Dendritic cell treated with granulocyte-macrophage colony-stimulating factor and Interleukin-4, amounts not matched to agents 40 ng/mL and 50 ng/mL, for 4 days (primary cell): ENCODE measurements at regions of chrX and their contacts with region 1.

Region 1: DNA sequence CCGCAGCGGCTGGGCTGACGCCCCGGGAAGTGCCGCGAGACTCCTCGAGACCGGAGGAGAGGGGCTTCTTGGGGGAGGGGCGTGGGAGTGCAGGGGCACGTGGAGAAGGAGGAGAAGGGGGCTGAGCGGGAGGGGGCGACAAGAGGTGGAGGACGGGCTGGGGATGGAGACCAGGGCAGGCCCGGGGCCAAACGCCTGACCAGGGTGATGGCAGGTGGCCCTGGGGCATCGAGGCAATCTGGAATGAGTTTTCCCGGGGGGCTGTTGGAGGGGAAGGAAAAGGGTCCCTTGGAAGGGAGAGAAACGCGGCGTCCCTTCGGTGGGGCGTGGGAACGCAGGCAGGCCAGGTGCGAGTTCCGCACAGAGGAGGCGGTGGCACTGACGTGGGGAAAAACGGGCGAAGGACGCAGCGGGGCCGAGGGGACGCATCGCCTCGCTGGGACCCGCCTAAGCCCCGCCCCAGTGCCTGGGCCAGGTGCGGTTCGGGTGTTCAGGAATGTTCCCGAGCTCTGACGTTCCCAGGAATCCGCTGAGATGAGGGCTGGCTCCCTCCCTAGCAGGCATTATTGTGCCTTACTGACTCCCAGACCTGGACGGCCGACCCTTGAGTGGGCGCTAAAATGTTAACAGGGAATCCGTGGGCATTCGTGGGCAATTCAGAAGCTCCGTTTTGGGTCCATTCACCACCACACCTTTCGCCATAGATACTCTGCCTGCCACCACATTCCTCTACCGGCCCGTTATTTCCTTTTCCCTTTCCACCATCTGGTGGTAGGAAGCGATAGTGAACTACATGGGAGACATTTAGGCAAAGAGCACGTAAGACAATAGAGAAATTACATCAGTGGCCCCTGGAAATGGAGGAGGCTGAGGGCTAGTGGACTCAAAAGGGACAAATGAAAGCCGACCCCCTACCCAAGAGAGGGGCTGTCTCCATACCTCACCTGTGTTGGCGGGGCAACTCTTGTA is 795 bp upstream of the SH3KBP1 start:
- H3K4me3 Mint-ChIP-seq: peak overlapping the region; percentile 80
- H3K27ac Mint-ChIP-seq: peak overlapping the region; percentile 41
- H3K4me1 Mint-ChIP-seq: peaks cover 26% of the 10 kb centered on the region
- H3K27me3 Mint-ChIP-seq: no peaks in the 10 kb centered on the region

Region 2: GRCh38 chrX:19593690-19594089 is 294.5 kb before region 1 on chrX:
- intact Hi-C with region 1: loop called (anchors 1 kb)
- H3K4me3 Mint-ChIP-seq: no peak overlapping the region
- H3K27ac Mint-ChIP-seq: no peak overlapping the region
- H3K4me1 Mint-ChIP-seq: peaks cover 13% of the 10 kb centered on the region
- H3K27me3 Mint-ChIP-seq: no peaks in the 10 kb centered on the region

Region 3: DNA sequence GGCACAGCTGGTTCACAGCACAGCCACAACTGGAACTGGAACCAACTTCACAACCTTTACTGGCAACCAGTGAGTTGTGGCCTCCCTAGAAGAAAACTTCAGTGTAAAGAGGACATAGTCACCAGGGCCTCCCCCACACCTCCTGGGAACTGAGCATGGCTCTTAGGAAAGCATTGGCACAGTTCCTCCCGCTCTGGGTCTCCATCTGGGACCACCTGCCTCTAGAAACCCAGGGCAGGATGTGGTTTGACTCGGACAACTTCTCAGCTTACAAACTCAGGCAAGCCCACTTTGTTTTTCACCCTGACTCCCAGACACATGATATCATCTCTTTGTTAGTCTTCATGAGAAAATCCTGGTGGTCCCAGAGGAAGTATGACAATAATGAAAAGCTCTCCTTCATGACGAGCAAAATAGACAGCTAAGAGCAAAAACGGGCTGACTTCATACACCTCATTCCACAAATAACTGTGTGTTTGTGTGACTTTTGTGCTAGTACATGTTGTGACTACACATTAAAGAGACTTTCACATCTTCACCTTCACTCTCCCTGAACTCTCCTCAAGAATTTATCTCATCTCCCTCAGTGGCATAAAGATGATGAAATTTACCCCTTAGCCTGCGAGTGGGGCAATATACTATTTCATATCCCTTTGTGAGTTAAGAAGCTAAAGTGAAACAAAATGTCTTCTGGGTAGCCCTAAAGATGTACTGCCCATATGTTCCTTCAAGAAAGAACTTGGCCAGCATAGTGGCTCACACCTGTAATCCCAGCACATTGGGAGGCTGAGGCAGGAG is 76.2 kb before region 1 on chrX:
- intact Hi-C with region 1: loop called (anchors 5 kb)
- H3K4me3 Mint-ChIP-seq: no peak overlapping the region
- H3K27ac Mint-ChIP-seq: peak overlapping the region; percentile 62
- H3K4me1 Mint-ChIP-seq: peaks cover 38% of the 10 kb centered on the region
- H3K27me3 Mint-ChIP-seq: no peaks in the 10 kb centered on the region